ENCODE measurements at regions of chr2 and their contacts with region 1.

Region 1: GRCh38 chr2:7044261-7045250 is 127.3 kb downstream of the RNF144A start:
- DNase-seq: peak; percentile 75
- CTCF ChIP-seq: peak; percentile 85

Region 2: DNA sequence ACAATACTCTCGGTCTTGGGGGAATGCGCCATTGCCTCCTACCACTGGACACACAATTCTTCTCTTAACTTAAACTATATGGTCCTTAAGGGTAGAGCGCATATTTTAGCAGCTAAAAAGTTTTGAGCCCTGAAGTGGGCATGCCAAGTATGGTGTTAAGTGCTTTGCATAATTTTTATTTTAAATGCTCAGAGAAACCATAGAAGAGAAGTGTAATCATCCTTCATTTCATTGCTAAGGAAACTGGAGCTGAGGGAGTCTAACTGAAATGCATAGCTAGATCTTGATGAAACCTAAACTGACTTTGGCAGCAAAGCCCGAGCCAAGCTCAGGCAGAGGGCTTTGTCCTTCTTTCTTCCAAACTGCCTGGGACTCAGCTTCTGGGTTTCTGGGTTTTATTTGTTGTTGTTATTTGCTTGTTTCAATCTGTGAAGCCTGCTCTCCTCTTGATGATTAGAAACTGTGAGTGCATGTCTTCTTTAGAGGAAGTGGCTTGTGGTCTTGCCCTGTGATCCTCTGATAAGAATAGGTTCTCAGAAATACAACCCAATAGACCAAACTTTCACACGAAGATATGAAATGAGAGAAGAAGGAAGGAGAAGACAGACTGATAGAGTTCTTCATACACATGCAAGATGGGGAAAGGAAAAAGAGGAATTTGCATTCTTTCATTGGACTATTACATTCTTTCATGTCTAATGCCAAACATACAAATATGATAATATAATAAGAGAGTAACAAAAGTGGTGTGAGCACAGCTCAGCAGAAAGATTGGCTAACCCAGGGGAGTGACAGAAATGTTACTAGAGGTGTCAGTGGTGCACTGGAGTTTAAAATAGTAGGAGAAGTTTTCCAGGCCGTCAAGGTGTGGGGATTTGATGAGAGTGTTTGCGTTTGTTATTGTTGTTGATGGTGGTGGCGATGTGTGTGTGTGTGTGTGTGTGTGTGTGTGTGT is 134.8 kb before region 1 on chr2:
- CTCF ChIA-PET with region 1: interaction called, 18 read pairs
- POLR2A ChIA-PET with region 1: no interaction called
- DNase-seq: peak; percentile 50
- CTCF ChIP-seq: no peak

Region 3: DNA sequence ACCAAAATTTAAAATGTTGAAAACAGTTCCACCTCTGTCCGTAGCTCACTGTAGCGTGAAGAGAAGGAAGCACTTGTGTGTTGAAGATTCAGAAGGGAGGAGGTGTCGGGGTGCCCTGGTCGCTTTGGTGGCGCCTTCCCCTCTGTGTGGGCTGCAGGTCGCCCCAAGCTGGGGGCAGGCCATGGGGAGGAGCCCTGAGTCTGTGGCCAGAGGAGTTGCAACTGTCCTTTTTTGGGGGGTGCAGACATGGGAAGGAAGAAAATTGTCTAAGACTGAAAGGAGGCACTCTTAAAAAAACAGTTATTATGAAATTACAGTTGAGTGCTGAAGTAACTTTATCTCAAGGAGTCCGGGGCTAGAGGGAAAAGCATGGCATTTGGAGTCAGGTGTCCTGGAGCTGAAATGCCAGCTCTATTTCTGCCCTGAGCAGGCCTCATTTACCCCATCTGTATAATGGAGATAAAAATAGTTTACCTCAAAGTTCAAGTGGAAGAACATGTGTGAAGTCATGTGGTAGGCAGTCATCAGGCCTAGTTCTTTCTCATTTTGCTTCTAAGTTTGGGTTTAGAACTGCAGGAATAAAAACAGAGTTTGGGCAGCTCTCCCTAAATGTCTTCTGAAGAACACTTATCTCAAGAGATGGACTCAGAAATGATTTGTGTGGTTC is 45.2 kb before region 1 on chr2:
- CTCF ChIA-PET with region 1: interaction called, 17 read pairs
- POLR2A ChIA-PET with region 1: no interaction called
- DNase-seq: peak; percentile 60
- CTCF ChIP-seq: no peak

Region 4: DNA sequence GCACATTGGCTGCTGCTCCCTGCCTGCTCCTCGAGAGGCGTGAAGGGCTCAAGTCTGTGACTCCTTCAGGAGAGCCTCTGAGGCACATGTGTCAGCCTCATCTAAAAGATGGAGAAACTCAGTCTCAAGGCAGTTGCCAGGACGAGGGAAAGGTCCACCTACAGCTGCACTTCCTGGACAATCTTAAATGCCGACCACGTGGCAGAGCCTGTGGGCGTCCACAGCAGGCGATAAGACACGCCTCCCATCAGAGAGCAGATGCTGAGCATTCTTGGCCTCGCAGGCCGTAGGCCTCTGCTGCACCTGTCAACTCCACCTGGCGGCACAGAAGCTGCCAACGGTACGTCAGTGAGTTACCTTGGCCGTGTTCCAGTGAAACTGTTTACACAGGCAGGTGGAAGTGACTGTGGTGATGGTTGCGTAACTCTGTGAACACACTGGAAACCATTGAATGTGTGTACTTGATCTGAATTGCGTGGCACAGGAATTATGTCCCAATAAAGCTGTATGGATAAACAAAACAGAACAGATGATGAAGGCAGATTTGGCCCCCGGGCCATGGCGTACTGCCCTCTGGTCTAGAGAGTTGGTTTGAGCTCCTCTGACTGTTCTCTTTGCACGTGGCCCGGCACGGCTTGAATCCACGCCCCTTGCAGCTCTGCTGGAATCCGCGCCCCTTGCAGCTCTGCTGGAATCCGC is 12.9 kb before region 1 on chr2:
- CTCF ChIA-PET with region 1: interaction called, 138 read pairs
- POLR2A ChIA-PET with region 1: no interaction called
- DNase-seq: no peak
- CTCF ChIP-seq: no peak

Region 5: DNA sequence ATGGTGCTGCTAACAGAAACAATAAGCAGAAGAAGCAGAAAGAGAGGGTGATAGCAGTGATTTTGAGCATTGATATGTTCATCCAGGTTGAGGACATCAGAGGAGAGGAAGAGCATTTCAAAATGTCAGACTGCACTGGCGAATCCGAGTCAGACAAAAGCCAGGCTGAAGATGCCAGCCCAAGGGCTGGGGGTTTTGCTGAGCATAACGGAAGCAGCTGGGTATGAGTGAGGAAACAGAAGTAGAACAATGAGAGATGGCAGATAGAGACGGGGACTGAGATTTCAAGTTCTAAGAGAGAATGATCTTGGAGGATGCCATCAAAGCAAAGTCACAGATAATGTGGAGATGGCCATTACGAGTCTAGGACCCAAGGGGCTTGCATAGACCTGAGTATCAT is 23.9 kb after region 1 on chr2:
- CTCF ChIA-PET with region 1: interaction called, 14 read pairs
- POLR2A ChIA-PET with region 1: no interaction called
- DNase-seq: no peak
- CTCF ChIP-seq: no peak

Measured in GM10248 (cell line).